ENCODE measurements at regions of chr1 and their contacts with region 1.

Region 1: DNA sequence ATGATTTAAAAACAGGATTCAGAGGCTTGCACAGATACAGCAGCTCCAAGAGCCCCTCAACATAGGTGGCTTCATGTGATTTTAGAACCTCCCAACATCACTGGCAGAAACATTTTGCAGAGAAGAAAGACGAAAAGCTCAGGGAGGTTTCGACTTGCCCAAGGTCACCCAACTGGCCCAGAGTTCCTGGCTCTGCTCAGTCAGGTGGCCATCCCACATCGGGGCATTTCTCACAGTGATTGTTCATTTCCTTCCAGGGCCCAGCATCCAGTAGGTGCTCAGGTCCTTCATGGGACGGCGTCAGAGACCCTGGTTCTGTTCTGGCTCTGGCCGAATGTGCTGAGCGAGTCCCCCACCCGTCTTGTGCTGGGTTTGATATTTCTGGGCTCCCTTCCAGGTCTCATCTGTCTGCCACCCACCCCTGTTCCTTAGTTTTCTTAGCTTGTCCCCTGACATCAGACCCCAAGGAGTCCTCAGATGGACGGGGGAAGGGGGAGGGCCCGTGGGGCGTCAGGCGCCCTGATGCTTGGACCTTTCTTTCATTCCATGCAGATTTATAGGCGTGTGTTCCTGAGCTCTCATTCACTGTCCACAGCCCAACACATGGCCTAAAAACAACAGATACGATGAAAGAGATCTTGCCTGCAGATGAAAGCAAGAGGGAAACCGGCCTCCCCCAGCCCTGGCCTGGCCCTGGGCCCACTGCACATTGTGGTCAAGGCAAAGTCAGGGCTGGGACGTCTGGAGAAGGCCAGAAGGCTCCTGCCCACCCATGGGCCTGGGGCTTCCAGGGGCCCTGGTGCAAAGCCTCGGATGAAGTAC is 123.1 kb upstream of the ZBTB40 start:
- DNase-seq: no peak
- H3K4me3 ChIP-seq: no peak overlapping the region
- H3K27ac ChIP-seq: no peak overlapping the region
- H3K4me1 ChIP-seq: peaks cover 9% of the 10 kb centered on the region; the same call in 1 of the 2 replicates
- H3K27me3 ChIP-seq: no peaks in the 10 kb centered on the region
- CTCF ChIP-seq: no peak

Region 2: DNA sequence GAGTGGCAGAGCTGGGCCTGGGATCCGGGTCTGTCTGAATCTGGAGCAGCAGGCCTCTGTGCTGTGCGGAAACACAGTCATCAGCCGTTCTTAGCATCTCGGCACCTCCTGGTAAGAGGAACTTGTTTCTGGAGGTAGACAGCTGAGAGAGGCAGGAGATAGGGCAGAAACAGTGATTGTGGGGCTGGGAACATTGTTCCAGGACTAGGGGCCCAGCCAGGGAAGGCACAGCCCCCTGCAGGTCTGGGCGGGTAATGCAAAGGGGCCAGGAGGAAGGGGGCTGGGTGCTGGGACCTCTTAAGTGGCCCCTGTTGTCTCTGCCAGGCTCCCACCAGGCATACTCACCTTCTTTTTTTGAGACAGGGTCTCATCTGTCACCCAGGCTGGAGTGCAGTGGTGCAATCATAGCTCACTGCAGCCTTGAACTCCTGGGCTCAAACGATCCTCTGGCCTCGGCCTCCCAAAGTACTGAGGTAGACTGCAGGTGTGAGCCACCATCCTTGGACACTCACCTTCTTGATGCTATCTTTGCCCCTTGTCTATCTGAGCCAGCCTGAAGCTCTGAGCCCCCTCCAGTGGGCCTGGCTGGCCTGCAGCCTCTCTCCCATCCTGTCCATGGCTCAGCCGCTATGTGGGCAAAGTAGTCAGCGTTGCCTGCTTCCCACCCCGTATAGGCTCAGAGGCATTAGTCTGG is 11.2 kb before region 1 on chr1:
- CTCF ChIA-PET with region 1: interaction called, 12 read pairs
- POLR2A ChIA-PET with region 1: no interaction called
- intact Hi-C with region 1: no loop called
- DNase-seq: peak in 1 of 2 experiments; percentile 21
- H3K4me3 ChIP-seq: no peak overlapping the region
- H3K27ac ChIP-seq: no peak overlapping the region
- H3K4me1 ChIP-seq: no peaks in the 10 kb centered on the region
- H3K27me3 ChIP-seq: no peaks in the 10 kb centered on the region
- CTCF ChIP-seq: peak; percentile 70

Region 3: DNA sequence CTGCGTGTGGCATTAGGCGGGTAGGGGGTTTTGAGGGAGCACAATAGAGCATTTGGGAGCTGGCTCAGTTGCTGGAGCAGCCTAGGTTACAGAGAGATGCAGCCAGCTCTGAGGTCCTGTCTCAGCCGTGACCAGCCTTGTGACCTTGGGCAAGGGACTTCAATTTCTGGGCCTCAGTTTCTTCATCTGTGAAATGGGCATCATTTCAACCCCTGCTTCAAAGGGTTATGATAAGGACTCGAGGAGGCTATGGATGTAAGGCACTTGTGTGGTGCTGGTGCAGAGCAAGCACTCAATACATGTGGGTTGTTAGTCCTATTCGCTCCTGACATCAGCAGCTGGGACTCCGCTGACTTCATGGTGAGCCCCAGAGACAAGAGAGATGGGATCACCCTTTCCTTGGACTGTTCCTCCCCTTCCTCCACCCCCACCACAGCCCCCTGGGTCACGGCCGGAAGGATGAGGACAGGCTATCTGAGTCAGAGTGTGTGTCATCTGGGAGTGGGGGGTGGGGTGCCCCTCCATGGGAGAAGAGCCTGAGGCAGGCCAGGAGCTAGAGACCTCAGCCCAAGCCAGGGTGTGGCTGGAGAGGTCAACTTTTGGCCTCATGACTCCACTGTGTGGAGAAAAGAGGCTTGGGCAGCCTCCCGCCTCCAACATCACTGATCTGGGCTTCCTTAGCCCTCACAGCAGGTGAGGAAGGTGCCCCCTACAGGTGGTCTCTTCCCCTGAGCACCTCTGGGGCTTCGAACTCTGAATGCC is 51.7 kb after region 1 on chr1:
- CTCF ChIA-PET with region 1: no interaction called
- POLR2A ChIA-PET with region 1: no interaction called
- intact Hi-C with region 1: no loop called
- DNase-seq: peak in 1 of 2 experiments; percentile 35
- H3K4me3 ChIP-seq: no peak overlapping the region
- H3K27ac ChIP-seq: no peak overlapping the region
- H3K4me1 ChIP-seq: peaks cover 9% of the 10 kb centered on the region
- H3K27me3 ChIP-seq: no peaks in the 10 kb centered on the region
- CTCF ChIP-seq: 0 out of 2 replicates have a peak, but pooled peaks have one; percentile 22